Activated CD4-positive, alpha-beta T cell treated with anti-CD3 and anti-CD28 coated beads for 36 hours (primary cell): ENCODE measurements at regions of chr11 and their contacts with region 1.

Region 1: GRCh38 chr11:1087961-1088908 is 13.6 kb downstream of the MUC2 start:
- DNase-seq: peak; percentile 23
- ATAC-seq: no peak
- H3K4me3 Mint-ChIP-seq: no peak overlapping the region
- H3K27ac Mint-ChIP-seq: no peak overlapping the region
- H3K4me1 Mint-ChIP-seq: no peaks in the 10 kb centered on the region
- H3K27me3 Mint-ChIP-seq: no peaks in the 10 kb centered on the region

Region 2: DNA sequence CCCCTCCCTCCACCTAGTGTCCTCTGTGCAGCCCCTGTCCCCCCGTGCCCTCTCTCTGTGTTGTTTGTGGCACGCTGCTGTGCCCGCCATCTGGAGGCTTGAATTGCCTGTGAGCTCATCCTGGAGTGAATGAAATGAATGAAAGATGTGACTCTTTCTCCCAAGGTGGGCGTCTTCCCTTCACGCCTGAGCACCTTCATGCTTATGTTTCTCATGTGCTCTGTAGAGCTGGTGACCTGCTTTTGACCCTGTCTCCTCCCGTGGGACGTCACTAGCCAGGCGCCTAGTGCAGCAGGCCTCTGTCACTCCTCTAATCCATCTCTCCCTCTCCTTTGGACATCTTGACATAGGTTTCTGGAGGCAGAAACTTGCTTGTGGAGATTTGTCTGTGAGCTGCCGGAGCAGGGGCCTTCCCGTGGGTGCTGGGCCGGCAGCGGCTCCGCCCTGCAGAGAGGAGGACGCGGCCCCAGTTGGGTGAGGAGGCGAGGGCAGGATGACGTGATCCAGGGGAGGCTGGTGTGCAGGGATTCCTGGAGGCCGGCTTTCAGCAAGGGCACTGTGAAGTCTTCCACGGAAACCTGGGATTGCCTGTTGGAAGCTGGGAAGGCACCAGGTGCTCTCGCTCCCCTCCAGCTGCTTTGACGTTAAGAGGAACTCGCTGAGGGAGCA is 92.3 kb before region 1 on chr11:
- CTCF ChIA-PET with region 1: no interaction called
- POLR2A ChIA-PET with region 1: no interaction called
- intact Hi-C with region 1: no loop called
- DNase-seq: peak; percentile 24
- ATAC-seq: peak; percentile 45
- H3K4me3 Mint-ChIP-seq: no peak overlapping the region
- H3K27ac Mint-ChIP-seq: peak overlapping the region; percentile 39
- H3K4me1 Mint-ChIP-seq: peaks cover 12% of the 10 kb centered on the region
- H3K27me3 Mint-ChIP-seq: no peaks in the 10 kb centered on the region

Region 3: DNA sequence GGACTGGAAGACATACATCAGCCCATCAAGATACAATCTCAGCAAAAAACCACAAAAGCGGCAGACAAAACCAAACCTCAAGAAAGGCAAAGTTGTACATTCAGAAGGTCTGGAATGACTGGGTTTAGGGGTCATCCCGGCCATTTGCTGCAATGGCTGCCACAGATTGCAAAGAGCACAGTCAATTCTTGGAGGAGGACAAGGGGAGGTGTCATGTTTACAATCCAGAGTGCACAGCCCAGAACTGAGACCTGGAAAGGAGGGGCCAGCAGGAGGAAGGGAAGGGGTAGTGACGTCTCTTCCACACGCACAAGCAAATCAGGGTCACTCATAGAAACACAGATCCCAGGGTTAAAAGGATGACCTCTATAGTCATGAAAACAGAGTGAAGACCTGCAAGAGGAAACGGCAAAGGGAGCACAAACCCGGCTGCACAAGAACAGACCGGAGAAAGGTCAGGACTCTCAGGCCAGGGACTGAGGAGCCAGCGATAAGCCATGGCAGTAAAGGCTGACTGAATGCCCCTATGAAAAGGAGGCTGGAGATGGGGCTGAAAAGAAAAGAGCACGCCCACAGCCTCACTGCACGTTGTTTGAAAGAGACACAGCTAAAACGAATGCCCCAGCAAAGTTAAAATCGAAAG is 51.3 kb after region 1 on chr11:
- CTCF ChIA-PET with region 1: no interaction called
- POLR2A ChIA-PET with region 1: no interaction called
- intact Hi-C with region 1: loop called in 1 of 2 experiments (anchors 10 kb)
- DNase-seq: no peak
- ATAC-seq: peak; percentile 49
- H3K4me3 Mint-ChIP-seq: no peak overlapping the region
- H3K27ac Mint-ChIP-seq: no peak overlapping the region
- H3K4me1 Mint-ChIP-seq: peaks cover 6% of the 10 kb centered on the region
- H3K27me3 Mint-ChIP-seq: peaks cover 12% of the 10 kb centered on the region